ENCODE measurements at regions of chr15 and their contacts with region 1.

Region 1: DNA sequence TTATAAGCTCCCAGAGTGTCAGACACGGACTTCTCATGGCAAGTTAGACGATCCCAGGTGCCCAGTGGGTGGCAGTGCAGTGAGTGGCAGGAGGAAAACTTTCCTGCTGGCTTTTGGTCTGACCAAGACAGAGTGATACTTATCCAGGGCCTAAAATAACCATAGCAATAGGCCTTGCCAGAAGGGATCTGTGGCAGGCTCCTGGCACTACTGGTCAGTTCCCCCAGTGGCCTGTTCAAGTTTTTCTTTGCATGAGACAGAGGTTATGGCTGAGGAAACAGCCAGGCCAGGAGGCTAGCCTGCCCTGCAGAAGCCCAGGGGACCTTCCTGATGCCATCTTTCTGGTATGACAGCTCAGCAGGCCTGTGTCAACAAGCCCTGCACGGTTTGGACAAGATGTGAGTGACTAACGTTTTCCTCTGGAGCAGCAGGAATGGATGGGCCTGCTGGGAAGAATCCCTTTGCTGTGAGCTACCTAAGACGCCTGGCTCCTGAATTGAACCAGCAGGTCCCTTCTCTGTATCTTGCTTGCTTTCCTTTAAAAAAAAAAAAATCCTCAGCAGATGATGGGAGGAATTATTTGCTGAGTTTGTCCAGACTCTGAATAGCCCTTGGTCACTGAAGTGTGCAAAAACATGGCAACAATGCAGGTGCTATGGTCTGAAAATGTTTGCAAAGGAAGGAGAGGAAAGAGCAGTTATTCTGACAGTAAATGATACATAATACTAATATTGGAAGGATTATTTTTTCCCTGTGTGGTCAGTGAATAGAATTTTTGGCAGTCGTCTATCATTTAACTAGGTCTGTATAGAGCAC is 18.0 kb downstream of the SCG5 start:
- DNase-seq: no peak
- H3K4me3 ChIP-seq: no peak overlapping the region
- H3K27ac ChIP-seq: no peak overlapping the region
- H3K4me1 ChIP-seq: peaks cover 3% of the 10 kb centered on the region
- H3K27me3 ChIP-seq: no peaks in the 10 kb centered on the region
- CTCF ChIP-seq: peak; percentile 15

Region 2: DNA sequence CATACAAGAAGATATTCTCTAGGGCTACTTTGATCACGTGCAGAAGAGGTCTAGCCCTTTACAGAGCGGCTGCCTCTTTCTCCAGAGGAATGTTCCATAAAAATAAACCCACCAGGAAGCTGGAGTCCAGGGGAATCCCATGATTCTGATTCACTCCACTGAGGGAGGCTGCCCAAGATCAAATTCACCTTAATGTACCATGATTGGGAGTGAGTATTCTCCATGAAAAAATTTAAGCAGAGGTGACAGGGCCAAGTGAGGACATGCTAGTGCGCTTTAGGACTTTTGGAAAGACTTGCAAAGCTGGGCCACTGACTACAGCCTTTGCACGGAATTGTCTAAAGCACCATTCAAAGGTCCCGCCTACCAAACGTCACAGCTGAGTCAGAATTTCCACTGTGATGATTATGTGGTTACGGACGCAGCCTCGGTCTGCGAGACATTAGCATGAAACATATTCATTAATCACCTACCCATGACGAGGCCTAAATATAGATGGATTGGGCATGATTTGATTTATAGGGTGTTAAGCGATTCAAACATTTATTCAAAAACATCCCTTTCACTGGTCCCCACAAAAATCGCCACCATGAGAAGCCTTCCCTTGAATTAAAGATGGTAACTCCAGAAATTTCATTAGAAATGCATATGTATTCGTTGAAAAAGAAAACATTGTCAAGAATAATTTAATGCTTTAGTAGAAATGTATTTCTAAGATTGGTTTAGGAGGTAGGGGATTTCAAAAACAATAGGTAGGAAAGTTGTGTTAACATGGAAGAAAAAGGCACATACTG is 210.9 kb after region 1 on chr15:
- intact Hi-C with region 1: no loop called
- DNase-seq: no peak
- H3K4me3 ChIP-seq: no peak overlapping the region
- H3K27ac ChIP-seq: no peak overlapping the region
- H3K4me1 ChIP-seq: no peaks in the 10 kb centered on the region
- H3K27me3 ChIP-seq: no peaks in the 10 kb centered on the region
- CTCF ChIP-seq: no peak

Region 3: GRCh38 chr15:32936283-32936918 is 276.9 kb after region 1 on chr15:
- intact Hi-C with region 1: loop called (anchors 10 kb)
- DNase-seq: no peak
- H3K4me3 ChIP-seq: no peak overlapping the region
- H3K27ac ChIP-seq: no peak overlapping the region
- H3K4me1 ChIP-seq: no peaks in the 10 kb centered on the region
- H3K27me3 ChIP-seq: no peaks in the 10 kb centered on the region
- CTCF ChIP-seq: peak; percentile 51

Region 4: DNA sequence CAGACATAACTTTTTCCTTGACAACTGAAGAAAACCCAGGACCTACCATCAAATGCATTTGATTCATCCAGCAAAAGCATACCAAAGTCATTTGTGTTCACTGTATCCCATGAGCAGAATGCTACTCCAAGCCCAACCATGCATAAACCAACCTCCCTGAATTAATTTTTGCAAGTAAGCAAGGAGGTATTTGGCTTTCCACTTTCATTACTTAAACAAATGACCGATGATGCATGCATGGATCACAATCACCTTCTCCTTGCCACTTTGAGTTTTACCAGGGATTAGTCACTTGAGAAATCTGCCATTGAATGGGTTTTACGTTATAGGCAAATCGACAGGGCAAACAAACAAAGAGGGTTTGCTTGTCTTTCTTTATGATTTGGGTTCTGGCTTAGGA is 320.2 kb after region 1 on chr15:
- intact Hi-C with region 1: no loop called
- DNase-seq: no peak
- H3K4me3 ChIP-seq: no peak overlapping the region
- H3K27ac ChIP-seq: no peak overlapping the region
- H3K4me1 ChIP-seq: no peaks in the 10 kb centered on the region
- H3K27me3 ChIP-seq: no peaks in the 10 kb centered on the region
- CTCF ChIP-seq: no peak

Region 5: GRCh38 chr15:32994810-32995424 is 335.4 kb after region 1 on chr15:
- intact Hi-C with region 1: loop called (anchors 5 kb)
- DNase-seq: no peak
- H3K4me3 ChIP-seq: no peak overlapping the region
- H3K27ac ChIP-seq: no peak overlapping the region
- H3K4me1 ChIP-seq: no peaks in the 10 kb centered on the region
- H3K27me3 ChIP-seq: no peaks in the 10 kb centered on the region
- CTCF ChIP-seq: peak; percentile 64